ENCODE measurements at regions of chr16 and their contacts with region 1.

Region 1: DNA sequence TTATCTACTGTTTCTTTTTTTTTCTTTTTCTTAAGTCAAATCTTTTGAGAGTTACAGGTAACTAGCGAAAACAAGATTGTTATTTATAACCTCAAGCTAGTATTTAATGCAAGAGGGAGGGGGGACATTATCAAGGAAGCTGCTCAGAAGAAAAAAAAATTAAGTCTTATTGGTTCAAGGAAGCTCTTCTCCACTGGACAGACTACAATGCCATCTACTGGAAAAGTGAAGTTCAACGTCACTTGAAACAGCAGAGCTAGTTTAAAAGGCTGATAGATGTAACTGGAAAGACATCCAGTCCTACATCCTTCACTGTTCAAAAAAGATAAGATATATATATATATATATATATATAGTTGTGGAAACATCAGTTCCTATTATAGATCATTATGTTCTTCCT is 418.0 kb upstream of the PSMD7 start:
- DNase-seq: no peak
- H3K4me3 ChIP-seq: no peak overlapping the region
- H3K27ac ChIP-seq: no peak overlapping the region
- H3K27me3 ChIP-seq: peaks cover 0 to 21% (median 0%) of the 10 kb centered on the region in 45 donors
- CTCF ChIP-seq: peak in 55 of 56 donors; percentile 39 to 86 (median 68)

Region 2: GRCh38 chr16:72832621-72833248 is 1045.9 kb before region 1 on chr16:
- intact Hi-C with region 1: loop called in 1 of 2 experiments (anchors 10 kb)
- DNase-seq: peak; percentile 63 to 87 (median 74)
- H3K4me3 ChIP-seq: no peak overlapping the region
- H3K27ac ChIP-seq: peak overlapping the region in 12 of 59 donors; percentile 3 to 61 (median 26)
- H3K27me3 ChIP-seq: no peaks in the 10 kb centered on the region
- CTCF ChIP-seq: peak; percentile 74 to 98 (median 93)

Region 3: GRCh38 chr16:73565262-73565661 is 313.3 kb before region 1 on chr16:
- intact Hi-C with region 1: loop called in 1 of 2 experiments (anchors 5 kb)
- DNase-seq: no peak
- H3K4me3 ChIP-seq: no peak overlapping the region
- H3K27ac ChIP-seq: no peak overlapping the region
- H3K27me3 ChIP-seq: peaks cover 0 to 46% (median 10%) of the 10 kb centered on the region in 45 donors
- CTCF ChIP-seq: peak in 49 of 56 donors; percentile 22 to 72 (median 47)

Measured in dorsolateral prefrontal cortex (tissue), 120 donors.